Activated naive CD4-positive, alpha-beta T cell treated with anti-CD3 and anti-CD28 coated beads for 36 hours (primary cell): ENCODE measurements at regions of chr2 and their contacts with region 1.

Region 1: DNA sequence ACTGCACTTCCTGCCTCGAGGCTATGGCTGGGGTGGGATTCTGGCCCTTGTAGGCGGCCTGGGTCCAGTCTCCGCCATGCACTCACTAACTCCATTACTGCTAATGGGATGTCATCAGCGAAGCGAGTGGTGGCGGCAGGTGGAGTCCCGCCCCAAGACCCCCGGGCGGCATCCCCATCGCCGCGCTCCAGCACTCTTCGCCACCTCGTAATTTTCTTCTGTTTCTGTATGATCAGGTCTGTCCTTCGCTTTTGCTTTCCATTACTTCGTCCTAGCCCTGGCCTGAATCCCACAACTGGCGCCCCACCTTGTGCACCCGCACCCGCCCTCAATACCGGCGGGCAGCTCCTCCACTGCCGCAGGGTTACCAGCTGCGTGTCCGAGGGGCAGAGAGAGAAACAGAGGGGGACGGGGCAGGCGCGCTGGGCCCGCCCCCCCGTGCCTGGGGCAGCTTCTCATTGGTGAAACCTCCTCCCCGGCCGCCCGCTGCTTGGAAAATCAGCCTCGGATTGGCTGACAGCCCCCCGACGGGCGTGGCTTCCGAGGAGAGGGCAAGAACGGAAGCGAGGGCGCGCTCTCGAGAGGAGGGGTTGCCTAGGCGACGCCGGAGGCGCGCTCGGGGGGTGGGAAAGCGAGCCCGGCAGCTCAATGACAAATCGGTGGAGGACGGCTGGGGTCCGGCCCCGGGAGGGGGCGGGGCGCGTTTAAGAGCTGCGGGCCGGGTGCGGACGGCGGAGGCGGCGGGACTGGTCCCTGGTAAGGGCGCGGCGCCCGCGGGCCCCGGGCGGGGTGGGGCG is at the start of gene RALB:
- DNase-seq: peak; percentile 99
- H3K4me3 Mint-ChIP-seq: peak within 1 kb of the TSS; percentile 96
- H3K27ac Mint-ChIP-seq: peak within 1 kb of the TSS; percentile 74
- H3K4me1 Mint-ChIP-seq: peaks cover 40% of the 10 kb centered on the region
- H3K27me3 Mint-ChIP-seq: no peaks in the 10 kb centered on the region
- total RNA-seq, gene RALB: 16.4 to 19.3 TPM

Region 2: GRCh38 chr2:119678998-119679710 is 573.3 kb before region 1 on chr2 and contains the start of gene TMEM177:
- CTCF ChIA-PET with region 1: no interaction called
- intact Hi-C with region 1: loop called (anchors 1 kb)
- DNase-seq: peak; percentile 89
- H3K4me3 Mint-ChIP-seq: peak within 1 kb of the TSS; percentile 81
- H3K27ac Mint-ChIP-seq: peak within 1 kb of the TSS; percentile 62
- H3K4me1 Mint-ChIP-seq: peaks cover 41% of the 10 kb centered on the region
- H3K27me3 Mint-ChIP-seq: no peaks in the 10 kb centered on the region
- total RNA-seq, gene TMEM177: 11.9 to 13.3 TPM

Region 3: GRCh38 chr2:120109186-120110061 is 143.0 kb before region 1 on chr2:
- CTCF ChIA-PET with region 1: no interaction called
- intact Hi-C with region 1: loop called (anchors 1 kb)
- DNase-seq: no peak
- H3K4me3 Mint-ChIP-seq: no peak overlapping the region
- H3K27ac Mint-ChIP-seq: peak overlapping the region; percentile 78
- H3K4me1 Mint-ChIP-seq: peaks cover 27% of the 10 kb centered on the region
- H3K27me3 Mint-ChIP-seq: no peaks in the 10 kb centered on the region

Region 4: DNA sequence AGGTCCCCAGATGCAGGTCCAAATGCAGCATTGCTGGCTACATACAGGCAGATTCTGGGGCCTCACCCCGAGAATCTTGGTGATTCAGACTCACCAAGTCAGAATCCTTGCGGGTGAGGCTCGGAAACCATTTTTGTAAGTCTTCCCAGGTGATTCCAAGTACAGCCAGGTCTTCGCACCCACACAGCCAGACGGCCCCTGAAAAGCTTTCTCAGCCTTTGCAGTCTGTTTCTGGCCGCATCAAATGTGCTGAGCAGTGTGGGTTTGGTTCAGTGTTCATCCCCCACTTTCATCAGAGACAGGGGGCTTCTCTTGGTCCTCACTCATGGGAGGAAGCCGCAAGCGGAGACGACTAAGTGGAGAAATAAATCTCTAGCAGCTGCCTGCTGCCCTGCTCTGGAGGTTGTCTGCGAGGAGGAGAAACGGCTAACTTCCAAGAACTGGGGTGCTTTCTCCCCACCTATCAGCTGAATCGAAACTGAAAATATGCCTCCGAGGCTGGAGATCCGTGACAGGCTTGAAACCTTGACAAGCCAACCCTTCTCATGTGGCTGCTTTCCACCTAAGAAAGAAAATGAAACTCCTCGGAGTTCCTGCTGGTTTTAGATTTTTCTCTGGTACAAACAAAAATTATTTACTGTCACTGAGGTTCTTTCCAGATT is 20.3 kb before region 1 on chr2:
- CTCF ChIA-PET with region 1: interaction called, 3 read pairs
- intact Hi-C with region 1: loop called (anchors 1 kb)
- DNase-seq: peak; percentile 86
- H3K4me3 Mint-ChIP-seq: peak overlapping the region; percentile 82
- H3K27ac Mint-ChIP-seq: peak overlapping the region; percentile 94
- H3K4me1 Mint-ChIP-seq: peaks cover 47% of the 10 kb centered on the region
- H3K27me3 Mint-ChIP-seq: no peaks in the 10 kb centered on the region

Region 5: DNA sequence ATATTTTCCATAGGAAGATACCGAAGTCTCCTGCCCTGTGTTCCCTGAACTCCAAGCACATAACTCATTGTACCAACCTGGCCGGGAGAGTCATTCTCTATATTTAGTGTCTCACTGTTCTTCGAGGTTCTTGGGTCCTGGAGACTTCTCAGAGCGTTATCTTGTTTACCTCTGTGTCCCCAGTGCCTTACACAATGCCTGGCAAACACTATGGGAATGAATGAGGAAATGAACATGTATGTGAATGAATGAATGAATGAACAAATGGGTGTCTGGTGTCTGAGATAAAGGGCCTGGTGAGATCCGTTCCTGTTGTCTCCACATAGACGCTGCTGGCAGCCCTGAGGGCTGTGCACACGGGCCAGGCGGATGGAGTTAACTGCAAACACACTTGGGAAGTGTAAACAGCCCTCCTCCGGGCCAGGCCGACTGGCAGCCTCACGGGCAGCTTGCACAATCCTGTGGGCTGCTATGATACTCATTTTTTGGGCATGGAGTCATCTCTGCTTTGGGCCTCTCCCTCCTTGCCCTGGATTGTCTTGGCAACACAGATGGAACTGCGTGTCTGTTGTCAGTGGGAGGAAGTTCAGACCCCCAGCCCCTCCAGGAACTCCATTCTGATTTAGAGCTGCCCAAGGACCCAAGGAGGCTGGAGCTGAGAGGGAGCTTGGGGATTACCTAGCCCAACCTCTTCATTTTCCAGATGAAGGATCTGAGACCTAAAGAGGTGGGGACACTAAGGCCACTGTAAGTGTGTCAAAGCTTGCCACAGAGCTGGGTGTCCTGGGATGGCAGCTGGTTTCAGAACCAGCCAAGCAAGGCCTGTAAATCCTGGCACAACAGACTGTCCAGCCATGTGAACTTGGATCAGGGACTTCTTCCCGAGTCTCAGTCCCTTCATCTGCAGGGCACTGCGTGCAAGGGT is 217.9 kb after region 1 on chr2:
- CTCF ChIA-PET with region 1: no interaction called
- intact Hi-C with region 1: no loop called
- DNase-seq: no peak
- H3K4me3 Mint-ChIP-seq: no peak overlapping the region
- H3K27ac Mint-ChIP-seq: no peak overlapping the region
- H3K4me1 Mint-ChIP-seq: no peaks in the 10 kb centered on the region
- H3K27me3 Mint-ChIP-seq: no peaks in the 10 kb centered on the region

Region 6: DNA sequence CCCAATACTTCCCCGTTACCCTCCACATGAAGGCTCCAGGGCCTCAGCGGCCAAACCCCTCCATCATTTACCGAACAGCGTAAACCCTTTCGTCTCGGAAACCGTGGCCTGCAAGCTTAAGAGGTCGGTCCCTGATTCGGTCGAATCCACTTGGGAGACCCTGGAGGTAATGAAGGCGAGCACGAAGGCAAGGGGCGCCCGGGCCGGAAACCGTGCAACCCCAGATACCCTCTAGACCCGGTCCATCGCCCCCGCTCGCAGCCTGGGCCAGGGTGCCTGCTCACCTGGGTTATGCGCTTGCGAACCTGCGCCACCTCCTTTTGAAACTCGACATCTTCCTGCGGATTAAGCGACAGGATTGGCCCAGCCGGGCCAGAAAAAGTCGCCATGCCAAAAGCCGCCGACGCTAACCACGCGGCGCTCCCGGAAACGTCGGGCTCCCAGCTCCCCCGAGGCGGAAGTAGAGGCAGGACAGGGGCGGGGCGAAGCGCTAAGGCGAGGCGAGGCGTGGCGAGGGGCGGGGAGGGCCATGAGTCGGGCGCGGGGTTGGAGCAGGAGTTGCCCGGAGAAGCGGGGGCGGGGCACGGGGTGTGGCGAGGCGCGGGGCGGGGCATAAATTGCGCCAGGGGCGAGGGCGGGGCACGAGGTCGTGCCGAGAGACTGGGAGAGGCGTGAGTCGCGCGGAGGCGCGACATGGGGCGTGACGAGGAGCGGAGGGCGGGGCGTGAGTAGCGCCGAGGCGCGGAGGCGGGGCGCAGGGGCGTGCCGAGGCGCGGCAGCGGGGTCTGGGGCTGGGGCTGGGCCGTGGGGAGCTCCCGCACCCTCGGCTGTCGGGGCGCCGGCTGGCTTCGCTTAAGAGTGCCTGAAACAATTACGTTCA is 1484.3 kb after region 1 on chr2 and contains the start of gene NIFK:
- CTCF ChIA-PET with region 1: no interaction called
- intact Hi-C with region 1: loop called (anchors 2 kb)
- DNase-seq: peak; percentile 100
- H3K4me3 Mint-ChIP-seq: peak within 1 kb of the TSS; percentile 90
- H3K27ac Mint-ChIP-seq: peak within 1 kb of the TSS; percentile 93
- H3K4me1 Mint-ChIP-seq: peaks cover 41% of the 10 kb centered on the region
- H3K27me3 Mint-ChIP-seq: no peaks in the 10 kb centered on the region
- total RNA-seq, gene NIFK: 112 to 117 TPM